Tibial artery (tissue), 4 donors: ENCODE measurements at regions of chr10 and their contacts with region 1.

Region 1: GRCh38 chr10:67657775-67658174 is 38.2 kb downstream of the CTNNA3 start:
- DNase-seq: no peak
- H3K4me3 ChIP-seq: no peak overlapping the region
- H3K27ac ChIP-seq: no peak overlapping the region
- H3K4me1 ChIP-seq: no peaks in the 10 kb centered on the region
- H3K27me3 ChIP-seq: no peaks in the 10 kb centered on the region
- CTCF ChIP-seq: no peak

Region 2: DNA sequence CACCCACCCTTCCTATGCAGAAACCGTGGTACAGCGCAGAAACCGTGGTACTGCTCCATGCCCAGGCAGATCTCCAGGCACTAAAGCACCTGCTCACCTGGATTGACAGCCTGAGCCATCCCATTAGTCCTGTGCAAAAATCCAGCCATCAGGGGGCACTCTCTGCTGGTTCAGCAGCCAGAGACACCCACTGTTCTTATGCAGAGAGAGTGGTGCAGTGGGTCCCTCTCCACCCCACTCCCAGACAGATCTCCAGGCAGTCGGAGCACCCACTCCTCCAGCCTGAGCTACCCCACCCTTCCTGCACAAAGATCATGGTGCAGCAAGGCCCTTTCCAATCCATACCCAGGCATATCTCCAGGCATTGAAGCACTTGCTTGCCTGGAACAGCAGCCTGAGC is 181.6 kb before region 1 on chr10:
- intact Hi-C with region 1: no loop called
- DNase-seq: no peak
- H3K4me3 ChIP-seq: no peak overlapping the region
- H3K27ac ChIP-seq: no peak overlapping the region
- H3K4me1 ChIP-seq: no peaks in the 10 kb centered on the region
- H3K27me3 ChIP-seq: no peaks in the 10 kb centered on the region
- CTCF ChIP-seq: no peak

Region 3: GRCh38 chr10:67779465-67780203 is 121.9 kb after region 1 on chr10:
- intact Hi-C with region 1: loop called (anchors 10 kb)
- DNase-seq: peak in 1 of 2 donors; percentile 73
- H3K4me3 ChIP-seq: peak overlapping the region in 1 of 2 donors; percentile 18
- H3K27ac ChIP-seq: peak overlapping the region in 1 of 2 donors; percentile 37
- H3K4me1 ChIP-seq: peaks cover 0 to 9% (median 7%) of the 10 kb centered on the region in 4 donors
- H3K27me3 ChIP-seq: no peaks in the 10 kb centered on the region
- CTCF ChIP-seq: peak; percentile 74 to 86